CD4-positive, alpha-beta memory T cell (primary cell): ENCODE measurements at regions of chr17 and their contacts with region 1.

Region 1: DNA sequence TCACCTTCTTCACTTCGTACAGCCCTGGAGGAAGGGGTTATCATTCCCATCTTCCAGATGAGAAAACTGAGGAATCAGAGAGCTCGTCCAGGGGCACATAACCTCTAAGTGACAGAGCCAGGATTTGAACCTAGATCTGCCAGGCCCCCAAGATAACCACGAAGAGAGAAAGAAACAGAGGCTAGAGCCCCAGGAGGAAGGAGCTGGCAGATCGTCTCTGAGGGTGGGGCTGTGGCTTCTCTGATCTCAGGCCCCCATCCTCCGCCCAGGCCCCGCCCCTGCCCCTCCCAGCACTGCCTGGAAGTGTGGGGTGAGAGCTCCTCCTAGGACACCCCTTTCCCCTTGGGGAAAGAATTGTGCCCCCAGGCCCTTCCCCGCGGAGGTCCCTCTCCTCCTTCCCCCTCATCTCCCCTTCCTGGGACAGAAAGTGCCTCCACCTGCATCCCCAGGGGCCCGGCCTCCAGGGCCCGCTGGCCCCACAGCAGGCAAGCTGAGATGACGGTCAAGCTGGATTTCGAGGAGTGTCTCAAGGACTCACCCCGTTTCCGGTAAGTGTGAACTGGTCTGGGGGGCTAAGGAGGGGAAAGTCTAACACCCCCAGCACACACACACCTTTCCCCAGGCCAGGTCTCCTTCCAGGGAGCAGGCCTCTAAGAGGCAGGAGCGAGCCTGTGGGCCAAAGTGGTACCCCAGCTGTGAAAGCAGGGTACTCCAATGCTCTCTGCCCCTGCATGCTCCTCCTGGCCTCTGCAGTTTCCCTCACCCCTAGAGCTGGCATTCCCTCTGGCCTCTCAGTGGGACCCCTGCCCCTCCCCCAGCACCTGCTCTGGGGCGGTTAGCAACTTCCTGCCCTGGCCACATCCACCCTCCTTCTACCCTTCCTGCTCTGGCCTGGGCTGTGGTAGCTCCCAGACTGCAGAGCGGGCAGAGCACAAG is at the start of gene ACAP1:
- DNase-seq: peak; percentile 78 to 90 (median 81)
- H3K4me3 ChIP-seq: peak within 1 kb of the TSS; percentile 94 to 98
- H3K4me3 Mint-ChIP-seq: peak within 1 kb of the TSS; percentile 88 to 99 (median 98)
- H3K27ac ChIP-seq: peak within 1 kb of the TSS; percentile 74
- H3K27ac Mint-ChIP-seq: peak within 1 kb of the TSS; percentile 89 to 99 (median 97)
- H3K4me1 ChIP-seq: peaks cover 81% of the 10 kb centered on the region
- H3K4me1 Mint-ChIP-seq: peaks cover 38 to 75% (median 56%) of the 10 kb centered on the region in 4 donors
- H3K27me3 ChIP-seq: no peaks in the 10 kb centered on the region
- H3K27me3 Mint-ChIP-seq: no peaks in the 10 kb centered on the region
- total RNA-seq, gene ACAP1: 507 to 516 TPM

Region 2: DNA sequence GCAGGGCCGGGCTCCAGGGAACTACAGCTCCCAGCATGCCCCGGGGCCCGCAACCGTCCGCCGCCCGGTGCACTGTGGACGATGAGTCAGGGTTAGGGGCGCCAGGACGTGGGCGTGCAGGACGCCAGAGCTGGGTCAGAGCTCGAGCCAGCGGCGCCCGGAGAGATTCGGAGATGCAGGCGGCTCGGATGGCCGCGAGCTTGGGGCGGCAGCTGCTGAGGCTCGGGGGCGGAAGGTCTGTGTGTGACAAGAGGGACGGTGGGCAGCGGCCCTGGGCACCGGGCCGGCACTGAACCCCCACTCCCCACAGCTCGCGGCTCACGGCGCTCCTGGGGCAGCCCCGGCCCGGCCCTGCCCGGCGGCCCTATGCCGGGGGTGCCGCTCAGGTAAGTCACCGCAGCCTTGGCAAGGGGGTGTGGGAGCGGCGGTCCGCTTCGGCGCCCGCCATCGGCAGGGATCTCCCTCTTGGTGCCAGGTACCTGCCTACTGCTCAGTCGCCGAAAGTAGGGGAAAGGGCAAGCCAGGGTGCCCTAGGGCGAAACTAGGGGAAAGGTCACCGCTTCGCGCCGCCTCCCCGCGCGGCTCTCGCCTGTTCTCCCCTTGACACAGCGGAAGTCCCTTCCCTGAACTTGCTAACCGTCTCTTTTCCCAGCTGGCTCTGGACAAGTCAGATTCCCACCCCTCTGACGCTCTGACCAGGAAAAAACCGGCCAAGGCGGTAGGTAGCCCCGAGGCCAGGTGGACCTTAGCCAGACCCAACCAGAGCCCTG is 116.5 kb before region 1 on chr17 and contains the starts of genes ACADVL and DLG4:
- CTCF ChIA-PET with region 1: interaction called, 4 read pairs
- POLR2A ChIA-PET with region 1: interaction called, 10 read pairs
- intact Hi-C with region 1: no loop called
- DNase-seq: peak; percentile 54 to 77 (median 56)
- H3K4me3 ChIP-seq: peak within 1 kb of the TSS; percentile 54 to 89
- H3K4me3 Mint-ChIP-seq: peak within 1 kb of the TSS; percentile 87 to 98 (median 92)
- H3K27ac ChIP-seq: peak within 1 kb of the TSS; percentile 80
- H3K27ac Mint-ChIP-seq: peak within 1 kb of the TSS; percentile 94 to 99 (median 98)
- H3K4me1 ChIP-seq: peaks cover 54% of the 10 kb centered on the region
- H3K4me1 Mint-ChIP-seq: peaks cover 27 to 62% (median 41%) of the 10 kb centered on the region in 4 donors
- H3K27me3 ChIP-seq: no peaks in the 10 kb centered on the region
- H3K27me3 Mint-ChIP-seq: no peaks in the 10 kb centered on the region
- total RNA-seq, gene ACADVL: 340 to 342 TPM
- total RNA-seq, gene DLG4: 7.2 to 7.6 TPM

Region 3: DNA sequence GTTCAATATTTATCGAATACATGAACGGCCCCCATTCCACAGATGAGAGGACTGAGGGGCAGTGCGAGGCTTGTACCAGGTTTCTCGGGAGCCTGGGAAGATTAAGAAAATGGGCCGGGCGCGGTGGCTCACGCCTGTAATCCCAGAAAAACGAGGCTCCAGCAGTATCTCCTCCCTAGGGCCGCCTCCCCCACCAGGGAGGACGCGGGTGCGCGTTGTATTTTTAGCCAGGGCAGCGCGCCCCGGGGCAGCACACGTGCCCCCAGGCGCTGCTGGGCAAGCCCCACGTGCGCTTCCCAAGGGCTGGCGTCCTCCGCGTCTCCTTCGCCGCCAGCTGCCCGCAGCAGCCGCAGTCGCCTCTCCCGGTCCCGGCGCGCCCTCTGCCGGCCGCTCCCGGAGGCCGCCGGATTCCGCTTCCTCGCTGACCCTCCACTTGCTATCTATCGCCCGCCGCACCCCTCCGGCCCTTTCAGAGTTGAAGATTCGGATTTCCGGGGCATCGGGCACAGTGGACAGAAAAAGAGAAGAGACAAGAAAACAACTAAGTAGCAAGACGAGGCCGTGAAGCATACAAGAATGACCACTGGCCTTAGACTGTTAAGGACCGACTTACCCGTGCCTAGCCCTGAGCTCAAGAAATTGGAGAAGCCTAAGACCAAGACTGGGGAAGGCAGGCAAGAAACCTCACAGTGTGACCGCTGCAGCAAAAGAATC is 40.2 kb before region 1 on chr17:
- CTCF ChIA-PET with region 1: interaction called, 11 read pairs
- POLR2A ChIA-PET with region 1: interaction called, 3 read pairs
- intact Hi-C with region 1: no loop called
- DNase-seq: peak; percentile 41 to 62 (median 51)
- H3K4me3 ChIP-seq: no peak overlapping the region
- H3K4me3 Mint-ChIP-seq: peak overlapping the region in 6 of 8 donors; percentile 8 to 86 (median 50)
- H3K27ac ChIP-seq: no peak overlapping the region
- H3K27ac Mint-ChIP-seq: peak overlapping the region in 3 of 7 donors; percentile 55 to 60 (median 59)
- H3K4me1 ChIP-seq: peaks cover 26% of the 10 kb centered on the region
- H3K4me1 Mint-ChIP-seq: peaks cover 7 to 31% (median 18%) of the 10 kb centered on the region in 4 donors
- H3K27me3 ChIP-seq: no peaks in the 10 kb centered on the region
- H3K27me3 Mint-ChIP-seq: peaks cover 2 to 19% of the 10 kb centered on the region in 2 donors

Region 4: GRCh38 chr17:7314719-7315569 is 21.6 kb before region 1 on chr17 and contains the start of gene GPS2:
- CTCF ChIA-PET with region 1: interaction called, 21 read pairs
- POLR2A ChIA-PET with region 1: interaction called, 187 read pairs
- intact Hi-C with region 1: no loop called
- DNase-seq: peak; percentile 92 to 94 (median 93)
- H3K4me3 ChIP-seq: peak within 1 kb of the TSS; percentile 68 to 76
- H3K4me3 Mint-ChIP-seq: peak within 1 kb of the TSS; percentile 83 to 97 (median 92)
- H3K27ac ChIP-seq: peak within 1 kb of the TSS; percentile 83
- H3K27ac Mint-ChIP-seq: peak within 1 kb of the TSS; percentile 92 to 98 (median 96)
- H3K4me1 ChIP-seq: peaks cover 50% of the 10 kb centered on the region
- H3K4me1 Mint-ChIP-seq: peaks cover 29 to 64% (median 44%) of the 10 kb centered on the region in 4 donors
- H3K27me3 ChIP-seq: no peaks in the 10 kb centered on the region
- H3K27me3 Mint-ChIP-seq: no peaks in the 10 kb centered on the region
- total RNA-seq, gene GPS2: 127 to 132 TPM

Region 5: GRCh38 chr17:7383742-7384488 is 47.4 kb after region 1 on chr17:
- CTCF ChIA-PET with region 1: no interaction called
- POLR2A ChIA-PET with region 1: interaction called, 22 read pairs
- intact Hi-C with region 1: no loop called
- DNase-seq: peak; percentile 82 to 87 (median 84)
- H3K4me3 ChIP-seq: peak overlapping the region; percentile 42 to 86
- H3K4me3 Mint-ChIP-seq: peak overlapping the region; percentile 80 to 87 (median 82)
- H3K27ac ChIP-seq: peak overlapping the region; percentile 72
- H3K27ac Mint-ChIP-seq: peak overlapping the region; percentile 88 to 97 (median 94)
- H3K4me1 ChIP-seq: peaks cover 16% of the 10 kb centered on the region
- H3K4me1 Mint-ChIP-seq: peaks cover 8 to 28% (median 13%) of the 10 kb centered on the region in 4 donors
- H3K27me3 ChIP-seq: peaks cover 9% of the 10 kb centered on the region
- H3K27me3 Mint-ChIP-seq: peaks cover 28 to 32% of the 10 kb centered on the region in 2 donors

Region 6: GRCh38 chr17:7454980-7455379 is 118.5 kb after region 1 on chr17:
- CTCF ChIA-PET with region 1: interaction called, 4 read pairs
- POLR2A ChIA-PET with region 1: interaction called, 11 read pairs
- intact Hi-C with region 1: no loop called
- DNase-seq: no peak
- H3K4me3 ChIP-seq: peak overlapping the region; percentile 86 to 93
- H3K4me3 Mint-ChIP-seq: peak overlapping the region; percentile 92 to 100 (median 94)
- H3K27ac ChIP-seq: peak overlapping the region; percentile 73
- H3K27ac Mint-ChIP-seq: peak overlapping the region; percentile 88 to 98 (median 94)
- H3K4me1 ChIP-seq: peaks cover 23% of the 10 kb centered on the region
- H3K4me1 Mint-ChIP-seq: peaks cover 18 to 36% (median 22%) of the 10 kb centered on the region in 4 donors
- H3K27me3 ChIP-seq: no peaks in the 10 kb centered on the region
- H3K27me3 Mint-ChIP-seq: peaks cover 0 to 2% of the 10 kb centered on the region in 2 donors

Region 7: DNA sequence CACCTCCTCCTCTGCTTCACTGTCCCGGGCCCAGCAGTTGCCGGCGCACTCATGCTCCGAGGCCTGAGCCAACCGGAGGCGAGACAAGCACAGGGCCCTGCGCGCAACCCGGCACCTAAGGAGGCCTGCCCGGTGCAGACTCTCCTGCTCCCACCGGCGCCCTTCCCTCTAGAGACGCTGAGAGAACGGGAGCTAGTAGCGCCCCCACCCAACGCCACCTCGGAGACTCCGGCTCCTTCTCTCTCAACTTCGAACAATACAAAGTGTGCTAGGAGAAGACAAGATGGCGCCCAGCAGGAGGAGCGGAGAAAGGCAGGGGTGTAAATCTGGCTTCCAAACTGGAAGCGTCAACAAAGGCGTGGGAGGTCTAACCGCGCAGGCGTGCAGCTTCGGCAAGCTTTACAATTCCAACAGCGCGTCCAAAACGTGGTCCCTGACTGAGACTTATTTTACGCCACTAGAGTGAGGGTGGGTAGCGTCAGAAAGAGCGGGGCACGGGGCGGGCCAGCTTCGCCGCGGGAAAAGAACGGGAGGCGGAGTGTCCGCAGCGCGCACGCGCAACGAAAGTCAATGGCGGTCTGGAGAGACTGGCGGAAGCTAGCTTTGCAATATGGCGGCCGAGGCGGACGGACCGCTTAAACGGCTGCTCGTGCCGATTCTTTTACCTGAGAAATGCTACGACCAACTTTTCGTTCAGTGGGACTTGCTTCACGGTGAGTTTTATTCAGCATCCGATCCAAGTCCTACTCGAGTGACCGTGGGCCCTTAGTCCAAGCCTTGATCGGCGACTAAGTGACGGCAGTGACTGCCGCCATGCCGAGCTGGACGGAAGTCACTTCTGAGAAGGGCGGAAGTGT is 247.0 kb after region 1 on chr17 and contains the start of gene MPDU1:
- CTCF ChIA-PET with region 1: no interaction called
- POLR2A ChIA-PET with region 1: interaction called, 10 read pairs
- intact Hi-C with region 1: no loop called
- DNase-seq: peak; percentile 95 to 97 (median 97)
- H3K4me3 ChIP-seq: peak within 1 kb of the TSS; percentile 91 to 92
- H3K4me3 Mint-ChIP-seq: peak within 1 kb of the TSS; percentile 99 to 100 (median 100)
- H3K27ac ChIP-seq: peak within 1 kb of the TSS; percentile 97
- H3K27ac Mint-ChIP-seq: peak within 1 kb of the TSS; percentile 99 to 100 (median 100)
- H3K4me1 ChIP-seq: peaks cover 50% of the 10 kb centered on the region
- H3K4me1 Mint-ChIP-seq: peaks cover 20 to 65% (median 43%) of the 10 kb centered on the region in 4 donors
- H3K27me3 ChIP-seq: no peaks in the 10 kb centered on the region
- H3K27me3 Mint-ChIP-seq: no peaks in the 10 kb centered on the region
- total RNA-seq, gene MPDU1: 23.8 to 25.0 TPM

Region 8: DNA sequence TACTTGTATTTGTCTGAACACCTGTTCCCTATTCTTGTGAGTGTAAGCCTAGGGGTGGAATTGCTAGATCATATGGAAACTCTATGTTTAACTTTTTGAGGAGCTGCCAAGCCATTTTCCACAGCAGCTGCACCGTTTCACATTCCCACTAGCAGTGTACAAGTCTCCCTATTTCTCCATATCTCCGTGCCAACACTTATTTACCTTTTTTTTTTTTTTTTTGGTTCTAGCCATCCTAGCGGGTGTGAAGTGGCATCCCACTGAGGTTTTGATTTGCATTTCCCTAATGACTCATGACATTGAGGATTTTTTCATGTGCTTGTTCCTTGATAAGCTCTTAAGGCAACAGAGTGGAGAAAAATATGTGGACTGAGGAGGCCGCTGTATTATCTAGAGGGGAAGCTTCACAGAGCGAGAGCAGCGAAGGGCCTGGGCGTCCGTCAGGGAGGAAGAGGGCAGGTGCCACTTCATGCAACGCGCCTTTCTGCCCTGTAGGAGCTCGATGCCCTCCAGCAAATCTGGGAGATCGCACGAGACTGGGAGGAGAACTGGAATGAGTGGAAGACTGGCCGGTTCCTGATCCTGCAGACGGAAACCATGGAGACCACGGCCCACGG is 431.0 kb after region 1 on chr17:
- CTCF ChIA-PET with region 1: no interaction called
- POLR2A ChIA-PET with region 1: no interaction called
- intact Hi-C with region 1: no loop called
- DNase-seq: no peak
- H3K4me3 ChIP-seq: no peak overlapping the region
- H3K4me3 Mint-ChIP-seq: no peak overlapping the region
- H3K27ac ChIP-seq: no peak overlapping the region
- H3K27ac Mint-ChIP-seq: no peak overlapping the region
- H3K4me1 ChIP-seq: no peaks in the 10 kb centered on the region
- H3K4me1 Mint-ChIP-seq: no peaks in the 10 kb centered on the region
- H3K27me3 ChIP-seq: no peaks in the 10 kb centered on the region
- H3K27me3 Mint-ChIP-seq: peaks cover 18 to 21% of the 10 kb centered on the region in 2 donors